Activated CD4-positive, alpha-beta memory T cell treated with anti-CD3 and anti-CD28 coated beads for 36 hours (primary cell): ENCODE measurements at regions of chr2 and their contacts with region 1.

Region 1: DNA sequence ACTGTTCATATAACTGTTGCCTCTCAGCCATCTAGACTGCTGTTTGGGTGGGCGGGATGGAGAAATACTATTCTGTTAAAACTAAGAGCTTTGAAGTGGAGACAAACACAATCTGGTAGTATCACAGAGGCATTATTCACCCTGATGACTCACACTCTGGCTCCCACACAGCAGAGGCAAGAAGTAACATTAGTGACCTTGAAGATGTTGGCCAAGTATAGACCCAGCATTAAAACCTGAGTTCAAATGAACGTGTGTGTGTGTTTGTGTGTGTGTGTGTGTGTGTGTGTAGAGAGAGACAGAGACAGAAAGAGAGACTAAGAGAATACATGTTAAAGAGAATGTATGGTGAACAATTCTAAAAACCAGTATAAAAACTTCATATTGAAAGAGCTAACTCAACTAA is 22.5 kb upstream of the ACVR1 start:
- DNase-seq: peak; percentile 84
- H3K4me3 Mint-ChIP-seq: peak overlapping the region; percentile 82
- H3K27ac Mint-ChIP-seq: peak overlapping the region; percentile 99
- H3K4me1 Mint-ChIP-seq: peaks cover 82% of the 10 kb centered on the region
- H3K27me3 Mint-ChIP-seq: no peaks in the 10 kb centered on the region

Region 2: GRCh38 chr2:156332534-156333273 is 1565.9 kb before region 1 on chr2 and contains the start of gene NR4A2:
- CTCF ChIA-PET with region 1: no interaction called
- POLR2A ChIA-PET with region 1: no interaction called
- intact Hi-C with region 1: loop called (anchors 2 kb)
- DNase-seq: peak; percentile 92
- H3K4me3 Mint-ChIP-seq: peak within 1 kb of the TSS; percentile 94
- H3K27ac Mint-ChIP-seq: peak within 1 kb of the TSS; percentile 97
- H3K4me1 Mint-ChIP-seq: peaks cover 45% of the 10 kb centered on the region
- H3K27me3 Mint-ChIP-seq: peaks cover 2% of the 10 kb centered on the region
- total RNA-seq, gene NR4A2: 9.3 to 10.0 TPM

Region 3: GRCh38 chr2:156589381-156590079 is 1309.1 kb before region 1 on chr2:
- CTCF ChIA-PET with region 1: no interaction called
- POLR2A ChIA-PET with region 1: no interaction called
- intact Hi-C with region 1: no loop called
- DNase-seq: peak; percentile 10
- H3K4me3 Mint-ChIP-seq: no peak overlapping the region
- H3K27ac Mint-ChIP-seq: no peak overlapping the region
- H3K4me1 Mint-ChIP-seq: peaks cover 4% of the 10 kb centered on the region
- H3K27me3 Mint-ChIP-seq: no peaks in the 10 kb centered on the region

Region 4: DNA sequence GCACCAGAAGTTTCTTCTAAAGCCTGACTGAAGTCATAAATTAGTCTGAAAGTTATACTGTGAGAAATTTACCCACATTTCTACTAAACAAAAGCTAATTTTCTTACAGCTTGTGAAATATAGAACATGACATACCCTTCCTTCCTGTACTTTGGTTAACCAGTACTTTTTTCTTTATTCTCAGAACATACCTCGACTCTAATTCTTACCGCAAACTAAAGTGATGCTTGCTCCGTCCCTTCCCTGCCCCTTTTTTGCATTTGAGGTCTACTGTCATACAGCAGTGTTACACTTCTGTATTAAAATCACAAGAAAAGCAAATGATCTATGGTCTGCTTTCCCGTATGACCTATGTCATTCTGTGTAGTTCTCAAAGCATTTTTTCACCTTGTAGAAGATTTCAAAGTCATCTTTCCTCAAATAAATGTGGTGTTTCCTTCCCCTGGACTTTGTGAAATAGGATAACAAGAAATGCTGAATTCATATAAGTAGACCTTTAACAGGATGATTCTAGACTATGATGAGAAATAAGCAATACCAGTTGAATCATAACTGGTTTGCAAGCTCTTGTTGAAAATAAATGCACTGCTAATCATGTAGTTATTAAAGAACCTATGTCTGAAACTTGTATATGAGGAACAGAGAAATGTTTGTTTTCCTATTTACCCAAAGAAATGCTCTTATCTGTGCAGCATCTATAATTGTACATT is 485.1 kb before region 1 on chr2:
- CTCF ChIA-PET with region 1: no interaction called
- POLR2A ChIA-PET with region 1: interaction called, 3 read pairs
- intact Hi-C with region 1: loop called (anchors 1 kb)
- DNase-seq: peak; percentile 75
- H3K4me3 Mint-ChIP-seq: peak overlapping the region; percentile 65
- H3K27ac Mint-ChIP-seq: peak overlapping the region; percentile 98
- H3K4me1 Mint-ChIP-seq: peaks cover 81% of the 10 kb centered on the region
- H3K27me3 Mint-ChIP-seq: peaks cover 2% of the 10 kb centered on the region

Region 5: DNA sequence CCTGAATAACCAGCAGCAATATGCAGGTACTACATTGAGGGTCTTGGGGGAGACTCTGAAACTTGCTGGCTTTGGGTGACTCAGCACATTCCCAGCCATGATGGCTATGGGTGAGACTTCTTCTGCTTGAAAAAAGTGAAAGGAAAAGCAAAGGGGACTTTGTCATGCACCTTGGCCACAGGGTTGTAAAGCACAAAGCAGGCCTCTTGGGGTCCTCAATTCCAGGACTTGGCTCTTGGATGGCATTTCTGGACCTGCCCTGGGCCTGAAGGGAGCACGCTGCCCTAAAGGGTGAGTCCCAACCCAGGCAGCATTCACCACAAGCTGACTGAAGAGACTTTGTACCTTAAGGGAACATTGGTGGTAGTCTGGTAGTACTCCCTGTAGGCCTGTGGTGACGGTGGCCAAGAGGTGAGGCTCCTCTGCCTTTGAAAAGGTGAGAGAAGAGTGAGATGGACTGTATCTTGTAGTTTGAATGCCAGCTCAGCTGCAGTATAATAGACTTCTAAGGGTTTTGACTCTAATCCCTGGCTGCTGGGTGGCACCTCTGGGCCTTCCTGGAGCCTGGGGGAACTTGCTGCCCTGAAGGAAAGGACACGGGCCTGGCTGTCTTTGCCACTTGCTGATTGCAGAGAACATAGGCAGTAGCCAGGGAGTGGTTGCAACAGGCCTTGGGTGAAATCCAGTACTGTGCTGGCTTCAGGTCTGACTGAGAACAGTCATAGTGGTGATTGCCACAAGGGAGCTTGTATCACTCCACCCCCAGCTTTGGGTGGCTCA is 418.2 kb before region 1 on chr2:
- CTCF ChIA-PET with region 1: no interaction called
- POLR2A ChIA-PET with region 1: interaction called, 3 read pairs
- intact Hi-C with region 1: loop called (anchors 1 kb)
- DNase-seq: peak; percentile 82
- H3K4me3 Mint-ChIP-seq: peak overlapping the region; percentile 54
- H3K27ac Mint-ChIP-seq: peak overlapping the region; percentile 95
- H3K4me1 Mint-ChIP-seq: peaks cover 68% of the 10 kb centered on the region
- H3K27me3 Mint-ChIP-seq: no peaks in the 10 kb centered on the region

Region 6: GRCh38 chr2:157538064-157538463 is 360.5 kb before region 1 on chr2:
- CTCF ChIA-PET with region 1: no interaction called
- POLR2A ChIA-PET with region 1: no interaction called
- intact Hi-C with region 1: no loop called
- DNase-seq: no peak
- H3K4me3 Mint-ChIP-seq: no peak overlapping the region
- H3K27ac Mint-ChIP-seq: no peak overlapping the region
- H3K4me1 Mint-ChIP-seq: no peaks in the 10 kb centered on the region
- H3K27me3 Mint-ChIP-seq: no peaks in the 10 kb centered on the region

Region 7: DNA sequence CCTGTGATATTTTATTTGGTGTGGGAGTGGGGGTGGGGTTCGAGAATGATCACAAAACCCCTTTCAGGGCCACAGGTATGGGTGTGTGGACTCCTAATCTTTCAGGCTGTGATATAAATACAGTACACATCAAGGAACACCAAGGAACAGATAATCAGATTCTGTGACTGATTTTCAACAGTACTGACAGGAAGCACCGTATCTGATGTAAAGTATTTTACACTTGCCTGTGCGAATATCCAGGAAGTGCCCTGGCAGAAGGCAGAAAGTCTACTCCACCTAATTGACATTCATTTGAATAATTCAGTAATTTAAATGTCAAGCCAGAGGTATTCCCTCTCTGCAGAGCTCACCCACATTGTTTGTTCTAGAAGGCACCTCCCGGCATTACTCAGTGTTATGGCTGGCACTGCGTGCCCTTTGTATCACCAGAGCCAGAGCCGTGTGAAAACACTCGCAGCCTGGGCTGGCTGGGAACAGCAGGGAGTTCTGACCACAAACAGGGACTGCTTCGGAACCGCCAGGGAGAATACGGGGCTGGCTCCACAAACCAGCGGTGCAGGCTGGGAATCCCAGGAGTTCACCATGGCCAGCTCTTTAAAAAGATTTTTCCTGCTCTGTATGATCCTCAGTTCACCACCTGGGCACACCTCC is 114.3 kb before region 1 on chr2:
- CTCF ChIA-PET with region 1: interaction called, 4 read pairs
- POLR2A ChIA-PET with region 1: no interaction called
- intact Hi-C with region 1: loop called (anchors 1 kb)
- DNase-seq: peak; percentile 26
- H3K4me3 Mint-ChIP-seq: no peak overlapping the region
- H3K27ac Mint-ChIP-seq: peak overlapping the region; percentile 61
- H3K4me1 Mint-ChIP-seq: peaks cover 45% of the 10 kb centered on the region
- H3K27me3 Mint-ChIP-seq: no peaks in the 10 kb centered on the region

Region 8: DNA sequence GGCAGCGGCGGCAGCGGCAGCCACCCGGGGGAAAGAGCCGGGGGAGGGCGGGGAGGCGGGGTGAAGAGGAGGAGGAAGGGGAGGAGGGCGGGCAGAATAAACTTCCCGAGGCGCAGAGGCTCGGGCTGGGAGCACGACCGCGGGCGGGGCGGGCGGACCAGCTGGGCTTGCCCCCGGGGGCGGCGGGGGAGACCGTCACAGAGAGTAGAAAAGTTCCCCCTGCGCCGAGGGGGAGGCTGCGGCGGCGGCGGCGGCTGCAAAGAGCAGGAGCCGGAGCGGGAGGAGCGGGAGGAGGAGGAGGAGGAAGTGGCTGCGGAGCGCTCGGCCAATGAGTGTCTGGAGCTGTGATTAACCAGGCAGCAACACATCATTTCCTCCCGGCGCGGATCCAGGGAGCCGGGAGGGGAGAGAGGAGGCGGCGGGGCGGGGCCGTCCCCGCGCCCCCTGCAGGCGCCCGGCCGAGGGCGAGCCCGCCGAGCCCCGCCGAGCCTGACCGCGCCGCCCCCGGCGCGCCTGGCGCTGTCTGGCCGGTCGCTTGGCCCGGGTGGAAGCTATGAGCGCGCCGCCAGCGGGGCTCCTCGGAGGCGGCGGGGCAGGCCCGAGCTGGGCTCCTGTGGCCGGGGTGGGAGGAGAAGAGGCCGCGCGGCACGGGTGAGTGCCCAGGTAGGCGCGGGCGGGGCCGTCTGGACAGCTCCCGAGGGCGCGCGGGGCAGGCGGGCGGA is 22.4 kb before region 1 on chr2 and contains the start of gene ACVR1:
- CTCF ChIA-PET with region 1: interaction called, 47 read pairs
- POLR2A ChIA-PET with region 1: interaction called, 70 read pairs
- intact Hi-C with region 1: loop called (anchors 1 kb)
- DNase-seq: peak; percentile 92
- H3K4me3 Mint-ChIP-seq: peak within 1 kb of the TSS; percentile 89
- H3K27ac Mint-ChIP-seq: peak within 1 kb of the TSS; percentile 88
- H3K4me1 Mint-ChIP-seq: peaks cover 56% of the 10 kb centered on the region
- H3K27me3 Mint-ChIP-seq: no peaks in the 10 kb centered on the region
- total RNA-seq, gene ACVR1: 24.8 to 25.0 TPM

Region 9: GRCh38 chr2:157922336-157922735 is 23.7 kb after region 1 on chr2:
- CTCF ChIA-PET with region 1: no interaction called
- POLR2A ChIA-PET with region 1: no interaction called
- intact Hi-C with region 1: no loop called
- DNase-seq: no peak
- H3K4me3 Mint-ChIP-seq: no peak overlapping the region
- H3K27ac Mint-ChIP-seq: no peak overlapping the region
- H3K4me1 Mint-ChIP-seq: peaks cover 5% of the 10 kb centered on the region
- H3K27me3 Mint-ChIP-seq: no peaks in the 10 kb centered on the region

Region 10: DNA sequence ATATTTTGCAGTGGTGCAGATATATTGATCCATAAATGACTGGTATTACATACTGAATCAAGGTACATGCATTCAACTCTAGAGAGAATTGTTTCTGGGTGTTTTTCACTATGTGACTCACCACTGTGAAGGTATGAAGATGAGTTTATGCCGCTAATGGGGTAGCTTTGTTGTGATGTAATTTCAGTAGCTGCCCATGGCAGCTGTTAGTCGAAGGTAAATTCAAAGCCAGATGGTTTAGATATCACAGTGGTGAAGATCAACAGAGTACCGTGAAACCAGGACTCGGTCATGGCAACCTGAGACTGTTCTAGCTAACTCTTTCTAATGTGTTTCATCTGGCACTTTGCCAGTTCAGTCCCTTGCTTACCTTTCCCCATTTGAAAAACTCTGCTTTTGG is 608.6 kb after region 1 on chr2:
- CTCF ChIA-PET with region 1: no interaction called
- POLR2A ChIA-PET with region 1: interaction called, 4 read pairs
- intact Hi-C with region 1: loop called (anchors 5 kb)
- DNase-seq: peak; percentile 55
- H3K4me3 Mint-ChIP-seq: no peak overlapping the region
- H3K27ac Mint-ChIP-seq: peak overlapping the region; percentile 11
- H3K4me1 Mint-ChIP-seq: peaks cover 32% of the 10 kb centered on the region
- H3K27me3 Mint-ChIP-seq: no peaks in the 10 kb centered on the region